Transverse colon (tissue), 4 donors: ENCODE measurements at regions of chr2 and their contacts with region 1.

Region 1: GRCh38 chr2:224650815-224651439 is 65.2 kb downstream of the CCDC195 start:
- DNase-seq: no peak
- H3K4me3 ChIP-seq: no peak overlapping the region
- H3K27ac ChIP-seq: no peak overlapping the region
- H3K4me1 ChIP-seq: peaks cover 0 to 8% (median 0%) of the 10 kb centered on the region in 4 donors
- H3K27me3 ChIP-seq: no peaks in the 10 kb centered on the region
- CTCF ChIP-seq: peak; percentile 67 to 83 (median 77)
- EP300 ChIP-seq: no peak
- POLR2A ChIP-seq: no peak

Region 2: DNA sequence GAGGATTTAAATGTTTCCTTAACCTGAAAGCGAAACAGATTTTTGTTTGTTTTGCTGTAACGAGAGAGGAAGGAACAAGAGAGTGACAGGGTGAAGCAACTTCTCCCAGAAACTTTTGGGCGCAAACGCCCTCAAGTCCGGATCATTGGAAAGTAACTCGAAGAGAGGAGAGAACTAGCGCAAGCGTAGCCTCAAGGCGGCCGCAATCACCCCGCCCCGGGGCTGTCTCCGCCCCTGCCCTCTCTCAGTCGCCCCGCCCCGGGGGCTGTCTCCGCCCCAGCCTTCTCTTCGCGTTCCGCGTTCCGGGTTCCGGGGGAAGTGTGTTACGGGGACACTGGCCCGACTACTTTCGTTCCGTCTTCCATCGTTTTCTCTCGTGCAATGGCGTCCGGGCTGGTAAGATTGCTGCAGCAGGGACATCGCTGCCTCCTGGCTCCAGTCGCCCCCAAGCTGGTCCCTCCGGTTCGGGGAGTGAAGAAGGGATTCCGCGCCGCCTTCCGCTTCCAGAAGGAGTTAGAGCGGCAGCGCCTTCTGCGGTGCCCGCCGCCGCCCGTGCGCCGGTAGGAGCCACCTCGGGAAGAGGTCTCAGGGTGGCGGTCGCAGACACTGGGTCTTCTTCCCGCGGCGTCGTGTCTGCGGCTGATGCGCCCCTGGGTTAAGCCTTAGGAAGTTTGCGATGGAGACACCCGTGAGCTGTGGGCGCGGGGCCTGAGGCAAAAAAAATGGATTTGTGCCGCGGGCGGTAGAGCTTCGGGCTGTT is 693.7 kb before region 1 on chr2 and contains the start of gene MRPL44:
- in situ Hi-C with region 1: loop called in 1 of 4 experiments (anchors 25 kb)
- intact Hi-C with region 1: no loop called
- DNase-seq: peak; percentile 98
- H3K4me3 ChIP-seq: peak within 1 kb of the TSS; percentile 63 to 99 (median 72)
- H3K27ac ChIP-seq: peak within 1 kb of the TSS; percentile 81 to 88 (median 86)
- H3K4me1 ChIP-seq: peaks cover 21 to 61% (median 50%) of the 10 kb centered on the region in 4 donors
- H3K27me3 ChIP-seq: no peaks in the 10 kb centered on the region
- CTCF ChIP-seq: peak in 1 of 5 experiments; percentile 10
- EP300 ChIP-seq: no peak
- POLR2A ChIP-seq: peak; percentile 54
- total RNA-seq, gene MRPL44: 18.9 to 58.4 (median 31.7) TPM

Region 3: DNA sequence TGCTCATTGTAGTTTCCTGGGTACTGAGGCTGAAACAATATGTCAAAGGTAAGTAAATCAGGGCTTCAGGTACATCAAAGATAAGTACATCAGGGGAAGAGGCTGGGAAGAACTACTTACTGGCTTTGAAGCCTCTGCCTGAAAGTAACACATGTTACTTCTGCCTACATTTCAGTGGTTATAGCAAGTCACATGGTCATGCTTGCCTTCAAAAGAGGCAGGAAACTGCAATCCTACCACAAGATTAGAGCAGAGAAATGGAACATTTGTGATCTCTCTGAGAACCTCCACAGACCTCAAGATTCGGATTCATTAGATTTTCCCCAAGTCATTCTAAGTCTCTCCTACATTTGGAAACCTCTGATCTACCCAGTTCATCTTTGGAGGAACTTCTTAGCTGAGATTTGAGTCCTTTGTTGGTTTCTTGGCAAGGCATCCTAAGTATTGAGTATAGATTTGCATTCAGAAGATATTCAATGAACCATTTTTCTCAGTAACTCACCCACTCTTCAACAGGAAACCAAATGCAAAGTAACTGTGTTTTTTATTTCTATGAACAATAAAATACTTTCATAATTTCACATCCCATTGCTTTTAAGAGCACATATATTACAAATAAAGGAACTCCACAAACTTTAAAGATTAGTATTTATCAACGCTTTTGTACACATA is 113.8 kb after region 1 on chr2:
- in situ Hi-C with region 1: no loop called
- intact Hi-C with region 1: no loop called
- DNase-seq: no peak
- H3K4me3 ChIP-seq: no peak overlapping the region
- H3K27ac ChIP-seq: no peak overlapping the region
- H3K4me1 ChIP-seq: no peaks in the 10 kb centered on the region
- H3K27me3 ChIP-seq: no peaks in the 10 kb centered on the region
- CTCF ChIP-seq: no peak
- EP300 ChIP-seq: no peak
- POLR2A ChIP-seq: no peak

Region 4: GRCh38 chr2:225354281-225354774 is 703.4 kb after region 1 on chr2:
- in situ Hi-C with region 1: no loop called
- intact Hi-C with region 1: no loop called
- DNase-seq: no peak
- H3K4me3 ChIP-seq: no peak overlapping the region
- H3K27ac ChIP-seq: no peak overlapping the region
- H3K4me1 ChIP-seq: no peaks in the 10 kb centered on the region
- H3K27me3 ChIP-seq: no peaks in the 10 kb centered on the region
- CTCF ChIP-seq: no peak
- EP300 ChIP-seq: no peak
- POLR2A ChIP-seq: no peak

Region 5: DNA sequence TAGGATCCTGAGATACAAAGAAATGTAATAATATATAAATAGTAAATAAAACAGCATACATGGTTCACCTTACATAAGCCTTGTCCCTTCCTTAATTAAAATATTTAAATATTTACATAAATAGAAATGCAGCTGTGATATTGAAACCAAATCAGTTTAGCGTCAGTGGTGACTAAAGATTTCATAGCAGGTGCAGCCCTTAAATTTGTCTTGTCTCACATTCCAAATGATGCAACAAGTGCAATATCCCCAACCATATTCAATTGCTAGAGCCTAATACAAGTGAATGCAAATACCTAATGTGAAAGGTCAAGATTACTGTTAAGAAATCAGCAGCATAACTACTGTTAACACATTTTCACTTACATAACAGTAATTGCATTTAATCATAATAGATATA is 1288.1 kb after region 1 on chr2:
- in situ Hi-C with region 1: no loop called
- intact Hi-C with region 1: no loop called
- DNase-seq: no peak
- H3K4me3 ChIP-seq: no peak overlapping the region
- H3K27ac ChIP-seq: no peak overlapping the region
- H3K4me1 ChIP-seq: no peaks in the 10 kb centered on the region
- H3K27me3 ChIP-seq: no peaks in the 10 kb centered on the region
- CTCF ChIP-seq: no peak
- EP300 ChIP-seq: no peak
- POLR2A ChIP-seq: no peak